HEK293 (cell line): ENCODE measurements at regions of chr2 and their contacts with region 1.

Region 1: GRCh38 chr2:158723917-158724690 is 71.0 kb upstream of the DAPL1 start:
- H3K4me3 ChIP-seq: no peak overlapping the region
- H3K27ac ChIP-seq: no peak overlapping the region
- H3K4me1 ChIP-seq: no peaks in the 10 kb centered on the region
- CTCF ChIP-seq: peak; percentile 49; the same call in 1 of the 2 replicates

Region 2: DNA sequence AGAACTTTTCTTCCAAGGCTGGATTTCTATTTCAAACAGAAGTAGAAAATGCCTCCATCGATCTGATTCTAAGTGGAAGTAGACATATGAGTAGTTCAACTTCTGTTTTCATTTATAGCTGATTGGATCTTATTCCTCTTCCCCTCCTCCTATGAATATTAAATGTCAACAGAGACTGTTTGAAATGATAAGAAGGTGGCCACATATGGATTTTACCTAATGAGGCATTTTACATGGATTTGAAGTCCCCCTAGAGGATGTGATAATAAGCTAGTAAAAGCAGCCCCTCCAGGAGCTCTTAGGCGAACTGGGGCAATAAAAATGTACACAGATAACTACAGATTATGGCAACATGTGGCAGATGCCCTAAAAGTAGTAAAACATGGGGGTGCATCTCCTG is 551.4 kb before region 1 on chr2:
- CTCF ChIA-PET with region 1: no interaction called
- POLR2A ChIA-PET with region 1: no interaction called
- H3K4me3 ChIP-seq: no peak overlapping the region
- H3K27ac ChIP-seq: no peak overlapping the region
- H3K4me1 ChIP-seq: no peaks in the 10 kb centered on the region; the same call in 1 of the 2 replicates
- CTCF ChIP-seq: no peak

Region 3: DNA sequence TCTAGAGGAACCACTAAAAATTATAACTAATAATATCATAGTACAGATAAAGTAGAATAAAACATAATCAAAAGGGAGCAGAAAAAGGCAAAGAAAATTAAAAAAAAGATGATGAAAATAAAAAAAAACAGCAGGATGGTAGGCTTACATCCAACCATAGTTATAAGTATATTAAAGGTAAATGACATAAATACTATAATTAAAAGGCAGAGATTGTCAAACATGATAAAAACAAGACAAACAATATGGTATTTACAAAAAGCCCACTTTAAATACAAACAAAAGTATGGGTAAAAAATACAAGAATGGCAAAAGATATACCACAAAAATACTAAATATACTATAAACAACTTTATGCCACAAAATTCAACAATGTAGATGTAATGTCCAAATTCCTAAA is 292.0 kb before region 1 on chr2:
- CTCF ChIA-PET with region 1: no interaction called
- POLR2A ChIA-PET with region 1: no interaction called
- H3K4me3 ChIP-seq: no peak overlapping the region
- H3K27ac ChIP-seq: no peak overlapping the region
- H3K4me1 ChIP-seq: no peaks in the 10 kb centered on the region
- CTCF ChIP-seq: no peak

Region 4: GRCh38 chr2:158688722-158689121 is 35.4 kb before region 1 on chr2:
- CTCF ChIA-PET with region 1: interaction called, 10 read pairs
- POLR2A ChIA-PET with region 1: interaction called, 6 read pairs
- H3K4me3 ChIP-seq: no peak overlapping the region
- H3K27ac ChIP-seq: no peak overlapping the region
- H3K4me1 ChIP-seq: no peaks in the 10 kb centered on the region
- CTCF ChIP-seq: no peak

Region 5: GRCh38 chr2:158740127-158740526 is 16.0 kb after region 1 on chr2:
- CTCF ChIA-PET with region 1: interaction called, 17 read pairs
- POLR2A ChIA-PET with region 1: no interaction called
- H3K4me3 ChIP-seq: no peak overlapping the region
- H3K27ac ChIP-seq: no peak overlapping the region
- H3K4me1 ChIP-seq: no peaks in the 10 kb centered on the region
- CTCF ChIP-seq: no peak